PC-3 (cell line): ENCODE measurements at regions of chr6 and their contacts with region 1.

Region 1: DNA sequence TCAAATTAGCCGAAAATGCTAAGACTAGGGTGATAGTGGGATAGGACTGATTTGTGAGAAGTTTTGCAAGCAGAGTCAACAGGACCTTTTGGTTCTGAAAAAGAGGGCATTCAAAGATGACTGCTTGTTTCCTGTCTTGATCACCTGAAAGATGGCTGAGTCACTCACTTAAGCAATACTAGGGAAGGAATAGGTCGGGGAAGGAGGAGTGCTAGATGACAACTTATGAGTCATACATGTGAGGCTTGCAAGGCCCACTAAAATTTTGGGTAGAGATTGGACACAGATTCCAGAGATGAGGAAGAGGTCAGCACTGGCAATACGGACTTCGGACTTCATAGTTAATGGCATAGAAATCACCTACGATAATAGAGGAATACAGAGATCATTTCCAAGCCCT is 89.2 kb downstream of the FAM83B start:
- DNase-seq: peak; percentile 95
- ATAC-seq: peak; percentile 99
- H3K4me3 ChIP-seq: no peak overlapping the region
- H3K27ac ChIP-seq: peak overlapping the region; percentile 85
- H3K4me1 ChIP-seq: peaks cover 18% of the 10 kb centered on the region
- H3K27me3 ChIP-seq: no peaks in the 10 kb centered on the region
- CTCF ChIP-seq: no peak

Region 2: GRCh38 chr6:54698974-54699373 is 236.8 kb before region 1 on chr6:
- CTCF ChIA-PET with region 1: no interaction called
- POLR2A ChIA-PET with region 1: no interaction called
- intact Hi-C with region 1: no loop called
- DNase-seq: peak; percentile 88
- ATAC-seq: peak; percentile 46; the same call in 1 of the 2 replicates
- H3K4me3 ChIP-seq: no peak overlapping the region
- H3K27ac ChIP-seq: peak overlapping the region; percentile 37
- H3K4me1 ChIP-seq: peaks cover 42% of the 10 kb centered on the region
- H3K27me3 ChIP-seq: no peaks in the 10 kb centered on the region
- CTCF ChIP-seq: no peak

Region 3: GRCh38 chr6:54970337-54970736 is 34.6 kb after region 1 on chr6:
- CTCF ChIA-PET with region 1: no interaction called
- POLR2A ChIA-PET with region 1: no interaction called
- intact Hi-C with region 1: loop called (anchors 5 kb)
- DNase-seq: peak; percentile 90
- ATAC-seq: peak; percentile 96
- H3K4me3 ChIP-seq: no peak overlapping the region
- H3K27ac ChIP-seq: 0 out of 2 replicates have a peak overlapping the region, but pooled peaks have one; percentile 4
- H3K4me1 ChIP-seq: peaks cover 23% of the 10 kb centered on the region
- H3K27me3 ChIP-seq: no peaks in the 10 kb centered on the region
- CTCF ChIP-seq: no peak